ENCODE measurements at regions of chr9 and their contacts with region 1.

Region 1: DNA sequence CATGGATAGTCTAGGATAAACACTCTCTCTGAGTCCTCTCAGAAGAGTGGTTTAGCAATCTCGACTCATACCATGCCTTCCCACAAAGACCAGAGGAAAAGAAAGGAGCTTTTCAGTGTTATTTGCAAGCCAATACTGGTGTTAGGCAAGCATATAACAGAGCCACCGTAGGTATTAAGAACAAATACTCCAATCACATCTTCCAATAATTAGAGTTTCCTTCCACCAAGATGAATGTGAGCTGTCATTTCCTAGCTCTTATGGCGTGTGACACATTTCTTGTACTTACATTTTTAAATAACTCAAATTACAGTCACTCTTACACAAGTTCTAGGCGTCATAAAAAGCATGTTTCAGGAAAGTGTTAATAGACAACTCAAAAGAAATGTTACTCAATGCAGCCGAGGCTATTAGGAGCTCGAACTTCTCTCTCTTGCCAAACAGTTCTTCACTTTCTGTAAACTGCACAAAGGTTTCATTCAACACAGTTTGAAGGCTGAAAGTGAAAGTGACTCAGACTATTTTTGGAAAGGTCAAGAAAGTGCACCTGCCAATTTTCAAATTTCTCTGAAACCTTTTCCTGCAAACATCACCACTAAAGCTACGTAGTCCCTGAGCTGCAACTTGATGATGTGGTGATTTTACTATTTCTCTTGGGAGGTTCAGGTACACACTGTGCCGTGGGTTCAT is 153.8 kb downstream of the AUH start:
- DNase-seq: no peak
- H3K4me3 Mint-ChIP-seq: peak overlapping the region; percentile 19
- H3K27ac Mint-ChIP-seq: peak overlapping the region; percentile 97
- H3K4me1 Mint-ChIP-seq: peaks cover 72% of the 10 kb centered on the region
- H3K27me3 Mint-ChIP-seq: no peaks in the 10 kb centered on the region

Region 2: DNA sequence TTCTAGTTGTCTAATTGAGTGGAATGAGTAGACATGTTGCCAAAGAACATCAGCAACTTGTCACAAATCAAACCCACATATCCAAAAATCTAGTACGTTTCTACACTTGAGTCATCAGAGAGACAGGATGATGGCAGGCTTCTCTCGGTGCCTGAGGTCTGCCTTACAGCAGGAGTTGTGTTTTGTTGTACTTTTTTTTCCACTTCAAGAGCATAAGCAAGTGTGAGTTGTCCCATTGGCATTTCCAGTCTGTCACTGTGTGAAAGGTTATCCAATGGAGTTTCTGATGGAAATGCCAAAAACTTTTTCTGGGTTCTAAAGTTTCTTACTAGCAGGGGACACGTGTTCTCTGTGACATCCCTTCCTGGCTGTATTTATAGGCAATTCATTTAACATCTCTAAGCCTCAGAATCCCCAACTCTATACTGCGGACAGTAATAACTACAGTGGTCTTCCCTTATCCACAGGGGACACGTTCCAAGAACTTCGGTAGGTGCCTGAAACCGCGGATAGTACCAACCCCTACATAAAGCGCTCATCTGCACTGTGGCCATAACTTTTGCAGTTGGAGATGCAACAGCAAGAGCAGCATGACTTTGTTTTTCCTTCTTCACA is 159.8 kb before region 1 on chr9:
- CTCF ChIA-PET with region 1: no interaction called
- POLR2A ChIA-PET with region 1: interaction called, 3 read pairs
- intact Hi-C with region 1: loop called (anchors 1 kb)
- DNase-seq: peak; percentile 73
- H3K4me3 Mint-ChIP-seq: no peak overlapping the region
- H3K27ac Mint-ChIP-seq: peak overlapping the region; percentile 83
- H3K4me1 Mint-ChIP-seq: peaks cover 58% of the 10 kb centered on the region
- H3K27me3 Mint-ChIP-seq: peaks cover 40% of the 10 kb centered on the region

Region 3: GRCh38 chr9:91131433-91131839 is 76.4 kb before region 1 on chr9:
- CTCF ChIA-PET with region 1: interaction called, 4 read pairs
- POLR2A ChIA-PET with region 1: interaction called, 17 read pairs
- intact Hi-C with region 1: loop called (anchors 1 kb)
- DNase-seq: peak; percentile 92
- H3K4me3 Mint-ChIP-seq: peak overlapping the region; percentile 32
- H3K27ac Mint-ChIP-seq: peak overlapping the region; percentile 90
- H3K4me1 Mint-ChIP-seq: peaks cover 26% of the 10 kb centered on the region
- H3K27me3 Mint-ChIP-seq: peaks cover 4% of the 10 kb centered on the region

Region 4: DNA sequence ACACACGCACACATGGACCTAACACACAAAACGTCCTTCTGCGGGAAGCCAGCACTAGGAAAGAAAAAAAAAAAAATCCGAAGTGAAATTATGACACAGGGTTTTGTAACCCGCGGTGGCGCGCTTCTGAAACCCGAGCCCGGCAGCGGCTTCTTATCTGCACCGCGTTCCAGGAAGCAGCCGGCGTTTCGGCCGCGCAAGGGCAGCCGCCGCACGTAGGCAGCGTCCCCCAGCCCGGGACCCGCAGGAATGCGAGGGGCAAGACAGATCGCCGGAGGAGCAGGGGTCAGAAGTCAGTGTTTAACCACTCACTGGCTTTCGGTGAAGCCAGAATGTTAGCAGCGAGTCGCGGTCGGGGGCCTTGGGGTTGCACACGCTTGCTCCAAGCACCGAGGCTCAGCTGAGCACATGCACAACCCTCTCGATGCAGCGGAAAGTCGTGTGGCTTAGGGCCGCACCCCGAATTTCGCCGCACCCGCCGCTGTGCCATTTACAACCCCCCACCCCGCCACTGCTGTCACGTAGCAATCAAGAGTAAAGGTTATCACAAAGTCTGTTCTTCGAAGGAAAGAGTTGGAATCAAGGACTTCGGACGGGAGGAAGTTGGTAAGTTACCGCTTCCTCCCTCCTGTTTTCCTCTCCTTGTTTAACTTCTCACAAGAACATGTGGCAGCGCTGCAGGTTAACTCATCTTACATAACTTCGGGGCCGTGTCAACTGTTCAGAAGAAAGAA is 14.0 kb before region 1 on chr9:
- CTCF ChIA-PET with region 1: interaction called, 8 read pairs
- POLR2A ChIA-PET with region 1: interaction called, 71 read pairs
- intact Hi-C with region 1: loop called (anchors 1 kb)
- DNase-seq: peak; percentile 92
- H3K4me3 Mint-ChIP-seq: peak overlapping the region; percentile 77
- H3K27ac Mint-ChIP-seq: peak overlapping the region; percentile 98
- H3K4me1 Mint-ChIP-seq: peaks cover 62% of the 10 kb centered on the region
- H3K27me3 Mint-ChIP-seq: no peaks in the 10 kb centered on the region

Region 5: DNA sequence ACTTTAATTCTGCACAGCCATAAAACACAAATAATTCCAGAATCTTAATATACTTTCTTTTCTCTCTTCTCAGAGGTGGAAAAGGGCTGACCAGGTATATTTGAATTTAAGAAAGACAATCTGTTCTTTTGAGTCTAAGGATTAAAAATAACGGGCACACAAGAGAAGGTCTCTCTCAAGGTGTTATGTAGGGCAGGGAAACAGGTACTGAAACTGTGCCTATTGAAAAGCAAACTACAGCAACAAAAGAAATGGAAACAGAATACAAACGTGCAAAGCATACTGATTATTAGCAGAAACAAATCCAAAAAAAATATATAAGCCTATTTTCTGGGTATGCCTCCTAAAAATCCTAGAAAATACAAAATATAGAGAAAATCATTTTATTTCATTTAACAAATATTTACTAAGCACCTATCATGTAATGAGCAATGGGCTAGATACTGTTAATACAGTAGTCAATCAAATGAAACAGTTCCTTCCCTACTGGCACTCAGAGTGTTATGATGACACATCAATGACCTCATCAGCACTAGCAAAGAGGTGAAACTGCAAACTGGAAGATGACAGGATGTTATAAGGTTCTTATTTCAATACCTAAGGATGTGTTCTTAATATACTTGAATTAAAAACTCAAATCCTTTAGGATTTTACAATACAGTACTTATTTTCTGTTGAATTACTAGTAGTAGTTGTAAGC is 66.1 kb after region 1 on chr9:
- CTCF ChIA-PET with region 1: no interaction called
- POLR2A ChIA-PET with region 1: no interaction called
- intact Hi-C with region 1: loop called (anchors 5 kb)
- DNase-seq: no peak
- H3K4me3 Mint-ChIP-seq: no peak overlapping the region
- H3K27ac Mint-ChIP-seq: no peak overlapping the region
- H3K4me1 Mint-ChIP-seq: peaks cover 22% of the 10 kb centered on the region
- H3K27me3 Mint-ChIP-seq: no peaks in the 10 kb centered on the region

Region 6: DNA sequence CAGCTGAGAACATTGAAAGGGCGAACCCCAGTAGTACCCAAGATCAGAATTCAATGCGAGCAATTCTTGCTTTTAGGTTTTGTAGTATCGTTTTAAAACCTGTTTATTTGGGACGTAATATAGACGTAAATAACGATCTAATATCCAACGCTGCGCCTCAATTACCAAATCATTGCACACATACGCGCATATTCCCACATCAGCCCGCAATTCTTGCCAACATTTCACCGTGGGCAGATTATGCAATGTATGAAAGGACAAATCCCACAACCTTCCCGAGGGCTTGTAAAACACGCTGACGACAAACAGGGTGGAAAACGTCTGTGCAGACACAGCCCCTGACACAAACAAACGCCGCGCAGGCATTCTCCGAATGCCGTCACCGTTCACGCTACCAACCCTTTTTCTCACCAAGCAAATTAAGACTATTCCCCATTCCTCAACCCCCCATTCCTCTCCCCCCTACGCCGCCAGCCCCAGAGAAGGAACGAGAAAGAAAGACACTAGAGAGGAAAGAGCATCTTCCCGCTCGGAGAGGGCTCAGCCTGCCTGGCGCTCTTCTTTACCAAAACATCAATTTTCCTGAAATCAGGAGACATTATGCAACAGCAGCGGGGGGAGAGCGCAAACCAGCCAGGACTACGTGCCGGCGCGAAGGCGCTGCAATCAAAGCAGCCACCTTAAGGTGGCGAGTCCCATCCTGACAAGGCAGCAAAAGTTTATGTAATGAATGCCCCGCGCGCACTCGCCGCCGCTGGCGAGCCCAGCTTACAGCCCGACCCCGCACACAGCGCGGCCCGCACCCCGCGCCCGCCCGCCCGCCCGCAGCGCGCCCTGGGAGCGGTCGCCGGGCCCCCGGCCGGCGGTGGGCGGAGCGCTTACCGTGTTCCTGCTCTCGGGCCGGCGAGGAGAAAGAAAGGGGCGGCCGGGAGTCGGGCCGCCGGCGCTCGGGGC is 215.2 kb after region 1 on chr9:
- CTCF ChIA-PET with region 1: interaction called, 11 read pairs
- POLR2A ChIA-PET with region 1: interaction called, 13 read pairs
- intact Hi-C with region 1: loop called (anchors 1 kb)
- DNase-seq: peak; percentile 71
- H3K4me3 Mint-ChIP-seq: peak overlapping the region; percentile 98
- H3K27ac Mint-ChIP-seq: peak overlapping the region; percentile 93
- H3K4me1 Mint-ChIP-seq: peaks cover 62% of the 10 kb centered on the region
- H3K27me3 Mint-ChIP-seq: peaks cover 4% of the 10 kb centered on the region

Region 7: DNA sequence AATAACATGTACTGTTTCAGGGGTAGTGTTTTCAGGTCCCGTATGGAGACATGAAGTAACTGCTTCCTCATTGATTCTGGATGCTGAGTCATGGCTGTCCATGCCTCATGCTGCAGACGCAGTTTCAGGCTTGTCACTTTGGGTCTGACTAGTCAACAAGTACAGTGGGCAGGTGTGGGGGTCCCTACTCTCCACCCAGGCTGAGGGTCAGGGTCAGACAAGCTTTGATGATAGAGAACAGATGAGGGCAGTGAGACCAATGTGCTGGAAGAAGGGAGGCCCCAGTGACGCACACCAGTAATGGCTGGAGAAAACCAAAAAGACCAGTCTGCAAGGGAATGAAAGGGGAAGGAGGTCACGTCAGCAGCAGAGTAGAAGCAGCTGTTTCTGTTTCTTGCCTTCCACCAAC is 295.8 kb after region 1 on chr9:
- CTCF ChIA-PET with region 1: no interaction called
- POLR2A ChIA-PET with region 1: no interaction called
- intact Hi-C with region 1: no loop called
- DNase-seq: no peak
- H3K4me3 Mint-ChIP-seq: no peak overlapping the region
- H3K27ac Mint-ChIP-seq: no peak overlapping the region
- H3K4me1 Mint-ChIP-seq: peaks cover 8% of the 10 kb centered on the region
- H3K27me3 Mint-ChIP-seq: peaks cover 15% of the 10 kb centered on the region